ENCODE measurements at regions of chr15 and their contacts with region 1.

Region 1: DNA sequence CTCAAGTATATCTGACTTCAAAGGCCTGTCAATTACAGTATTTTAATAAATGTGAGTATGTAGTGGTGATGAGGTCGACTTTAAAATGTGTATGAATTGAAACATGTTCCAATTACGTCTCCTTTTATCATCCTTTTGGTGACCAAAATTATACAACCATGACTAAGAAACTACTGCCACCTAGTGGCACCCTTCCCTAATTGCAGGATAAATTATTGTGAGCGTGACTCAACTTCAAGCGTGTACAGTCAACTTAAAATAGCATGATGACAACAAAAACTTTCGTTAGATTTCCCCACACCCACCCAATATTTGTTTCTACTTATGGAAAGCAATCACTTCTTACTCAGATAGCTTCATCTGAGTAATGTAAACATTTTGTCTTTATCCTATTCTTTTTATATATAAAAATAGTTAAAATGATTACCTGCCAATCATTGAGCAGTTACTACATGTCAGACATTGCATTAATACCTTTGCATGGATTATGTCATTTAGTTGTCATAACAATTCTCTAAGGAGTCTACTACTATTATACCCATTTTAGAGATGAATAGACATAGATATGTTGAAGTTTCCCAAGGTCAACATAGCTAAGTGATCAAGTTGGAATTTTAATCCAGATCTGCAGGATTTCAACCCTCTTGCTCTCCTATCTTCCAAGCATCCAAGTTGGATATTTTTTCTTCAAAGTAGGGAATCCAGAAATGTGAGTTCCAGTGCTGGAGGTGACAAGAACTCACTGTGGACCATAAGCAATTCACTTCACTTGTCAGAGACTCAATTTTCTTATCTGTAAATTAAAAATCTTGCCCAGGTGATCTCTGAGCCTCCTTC is 106.0 kb downstream of the MEX3B start:
- DNase-seq: peak; percentile 46
- ATAC-seq: no peak
- H3K4me3 Mint-ChIP-seq: no peak overlapping the region
- H3K27ac Mint-ChIP-seq: no peak overlapping the region
- H3K4me1 Mint-ChIP-seq: peaks cover 16% of the 10 kb centered on the region
- H3K27me3 Mint-ChIP-seq: peaks cover 15% of the 10 kb centered on the region; the same call in 1 of the 2 replicates
- CTCF ChIP-seq: peak; percentile 83

Region 2: GRCh38 chr15:81809543-81809942 is 130.3 kb before region 1 on chr15:
- CTCF ChIA-PET with region 1: interaction called, 11 read pairs
- POLR2A ChIA-PET with region 1: no interaction called
- DNase-seq: peak; percentile 41
- ATAC-seq: peak; percentile 83
- H3K4me3 Mint-ChIP-seq: no peak overlapping the region
- H3K27ac Mint-ChIP-seq: peak overlapping the region; percentile 32; the same call in 1 of the 2 replicates
- H3K4me1 Mint-ChIP-seq: peaks cover 9% of the 10 kb centered on the region
- H3K27me3 Mint-ChIP-seq: no peaks in the 10 kb centered on the region; the same call in 1 of the 2 replicates
- CTCF ChIP-seq: no peak

Region 3: GRCh38 chr15:81981908-81982307 is 42.1 kb after region 1 on chr15:
- CTCF ChIA-PET with region 1: no interaction called
- POLR2A ChIA-PET with region 1: no interaction called
- DNase-seq: no peak
- ATAC-seq: no peak
- H3K4me3 Mint-ChIP-seq: no peak overlapping the region
- H3K27ac Mint-ChIP-seq: no peak overlapping the region
- H3K4me1 Mint-ChIP-seq: peaks cover 3% of the 10 kb centered on the region
- H3K27me3 Mint-ChIP-seq: no peaks in the 10 kb centered on the region
- CTCF ChIP-seq: no peak

Measured in WTC11 (cell line).